ENCODE measurements at regions of chr1 and their contacts with region 1.

Region 1: DNA sequence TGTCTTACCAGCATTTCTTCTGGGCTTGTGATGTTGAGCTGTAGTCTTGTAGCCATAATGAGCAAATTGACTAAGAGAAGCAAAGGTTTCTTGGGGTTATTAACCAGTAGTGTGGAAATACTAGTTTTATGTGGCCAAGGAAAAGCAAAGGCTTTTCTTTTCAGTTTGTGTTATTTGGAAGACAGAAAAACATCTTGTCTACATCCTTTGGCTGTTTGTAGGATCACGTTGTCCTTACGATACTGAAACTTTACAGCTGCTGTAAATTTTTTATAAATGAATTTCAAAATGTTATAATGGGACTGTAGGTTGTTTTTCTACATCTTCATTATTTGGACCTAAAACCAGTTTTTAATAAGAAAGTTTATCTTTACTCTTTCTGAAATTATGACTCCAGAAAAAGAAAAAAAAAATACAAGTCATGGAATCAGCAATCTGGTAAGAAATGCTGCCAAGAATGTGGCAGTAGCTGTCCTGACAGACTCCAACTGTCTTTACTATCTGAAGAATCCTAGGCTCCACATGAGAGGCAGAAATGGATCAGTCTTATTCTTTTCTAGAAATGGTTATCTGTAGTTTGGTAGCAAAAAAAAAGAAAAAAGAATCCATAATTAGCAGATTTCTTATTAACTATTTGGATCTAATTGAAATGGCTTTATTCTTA is 41.6 kb upstream of the QSOX1 start:
- DNase-seq: no peak
- ATAC-seq: no peak
- H3K4me3 ChIP-seq: no peak overlapping the region
- H3K27ac ChIP-seq: no peak overlapping the region
- H3K4me1 ChIP-seq: no peaks in the 10 kb centered on the region
- H3K27me3 ChIP-seq: no peaks in the 10 kb centered on the region
- CTCF ChIP-seq: no peak
- POLR2A ChIP-seq: no peak

Region 2: DNA sequence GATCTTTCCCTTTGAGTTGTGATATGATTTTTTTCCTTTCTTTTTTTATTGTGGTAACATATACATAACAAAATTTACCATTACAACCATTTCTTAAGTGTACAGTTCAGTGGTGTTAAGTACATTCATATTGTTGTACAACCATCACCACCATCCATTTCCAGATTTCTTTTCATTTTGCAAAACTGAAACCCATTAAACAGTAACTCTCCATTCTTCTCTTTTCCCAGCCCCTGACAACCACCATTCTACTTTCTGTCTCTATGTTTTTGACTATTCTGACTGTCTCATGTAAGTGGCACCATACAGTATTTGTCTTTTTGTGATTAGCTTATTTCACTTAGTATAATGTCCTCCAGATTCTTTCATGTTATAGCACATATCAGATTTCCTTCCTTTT is 128.2 kb before region 1 on chr1:
- in situ Hi-C with region 1: no loop called
- intact Hi-C with region 1: loop called (anchors 1 kb)
- DNase-seq: no peak
- ATAC-seq: no peak
- H3K4me3 ChIP-seq: no peak overlapping the region
- H3K27ac ChIP-seq: no peak overlapping the region
- H3K4me1 ChIP-seq: peaks cover 16 to 21% of the 10 kb centered on the region in 2 donors
- H3K27me3 ChIP-seq: no peaks in the 10 kb centered on the region
- CTCF ChIP-seq: no peak
- POLR2A ChIP-seq: no peak

Region 3: DNA sequence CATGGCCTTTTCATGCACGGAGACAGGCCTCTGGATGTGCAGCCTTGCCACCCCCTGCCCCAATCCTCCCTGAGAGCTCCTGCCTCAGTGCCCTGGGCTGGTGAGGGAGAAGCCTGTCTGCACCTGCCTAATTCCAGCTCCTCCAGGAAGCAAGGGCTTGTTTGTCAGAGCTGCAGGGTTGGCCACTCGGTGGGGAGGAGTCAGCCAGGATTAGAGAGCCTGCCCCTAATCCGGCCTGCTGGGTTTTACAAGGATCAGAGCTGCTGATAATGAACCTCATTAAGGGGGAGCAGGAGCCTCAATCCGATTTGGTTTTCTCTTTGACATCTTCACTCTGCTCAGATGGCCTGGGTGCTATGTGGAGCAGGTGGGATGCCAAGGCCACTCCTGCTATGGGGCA is 85.1 kb after region 1 on chr1:
- in situ Hi-C with region 1: no loop called
- intact Hi-C with region 1: no loop called
- DNase-seq: no peak
- ATAC-seq: no peak
- H3K4me3 ChIP-seq: no peak overlapping the region
- H3K27ac ChIP-seq: no peak overlapping the region
- H3K4me1 ChIP-seq: no peaks in the 10 kb centered on the region
- H3K27me3 ChIP-seq: no peaks in the 10 kb centered on the region
- CTCF ChIP-seq: no peak
- POLR2A ChIP-seq: no peak